Posterior vena cava (tissue), 2 donors: ENCODE measurements at regions of chr6 and their contacts with region 1.

Region 1: GRCh38 chr6:25070547-25071366 is 135.0 kb upstream of the RIPOR2 start:
- DNase-seq: peak; percentile 87

Region 2: DNA sequence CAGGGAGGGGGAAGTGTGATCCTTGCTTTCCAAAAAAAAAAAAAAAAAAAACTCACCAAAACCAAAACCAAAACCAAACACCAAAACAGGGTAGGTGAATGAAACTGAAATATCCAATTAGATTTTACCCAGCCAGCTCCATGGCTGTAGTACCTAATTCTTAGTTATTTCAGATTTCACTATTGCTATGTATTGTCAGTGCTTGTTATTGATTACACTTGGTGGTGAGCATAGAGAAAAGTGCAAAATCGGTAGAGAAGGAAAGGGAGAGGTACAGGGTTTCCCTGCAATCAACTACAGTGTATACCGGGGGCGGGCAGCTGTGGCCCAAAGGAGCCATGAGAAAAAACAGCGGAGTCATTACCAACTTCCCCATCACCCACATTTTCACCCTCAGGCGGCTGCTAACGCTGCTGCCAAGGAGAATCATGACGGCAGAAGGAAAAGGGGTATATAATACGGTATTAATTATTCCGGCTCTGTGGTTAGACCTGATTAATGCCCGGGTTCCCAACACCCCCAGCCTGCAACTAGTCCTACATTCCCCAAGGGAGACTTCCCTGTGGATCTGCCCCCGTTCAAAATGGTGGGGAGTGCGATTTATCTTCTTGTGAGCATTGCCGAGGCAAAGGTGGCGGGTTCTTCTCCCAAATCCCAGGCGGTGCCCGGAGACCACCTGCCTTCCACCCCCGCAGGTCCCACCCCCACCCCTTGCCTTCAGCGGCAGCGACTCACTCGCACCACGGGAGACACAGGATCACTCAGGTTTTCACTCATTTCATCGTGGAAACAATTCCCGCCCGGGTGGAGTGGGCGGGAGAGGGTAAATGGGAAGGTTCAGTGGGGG is 351.4 kb before region 1 on chr6 and contains the start of gene C6orf62:
- intact Hi-C with region 1: loop called in 1 of 2 experiments (anchors 10 kb)
- DNase-seq: peak; percentile 79
- total RNA-seq, gene C6orf62: 63.9 to 70.3 TPM

Region 3: DNA sequence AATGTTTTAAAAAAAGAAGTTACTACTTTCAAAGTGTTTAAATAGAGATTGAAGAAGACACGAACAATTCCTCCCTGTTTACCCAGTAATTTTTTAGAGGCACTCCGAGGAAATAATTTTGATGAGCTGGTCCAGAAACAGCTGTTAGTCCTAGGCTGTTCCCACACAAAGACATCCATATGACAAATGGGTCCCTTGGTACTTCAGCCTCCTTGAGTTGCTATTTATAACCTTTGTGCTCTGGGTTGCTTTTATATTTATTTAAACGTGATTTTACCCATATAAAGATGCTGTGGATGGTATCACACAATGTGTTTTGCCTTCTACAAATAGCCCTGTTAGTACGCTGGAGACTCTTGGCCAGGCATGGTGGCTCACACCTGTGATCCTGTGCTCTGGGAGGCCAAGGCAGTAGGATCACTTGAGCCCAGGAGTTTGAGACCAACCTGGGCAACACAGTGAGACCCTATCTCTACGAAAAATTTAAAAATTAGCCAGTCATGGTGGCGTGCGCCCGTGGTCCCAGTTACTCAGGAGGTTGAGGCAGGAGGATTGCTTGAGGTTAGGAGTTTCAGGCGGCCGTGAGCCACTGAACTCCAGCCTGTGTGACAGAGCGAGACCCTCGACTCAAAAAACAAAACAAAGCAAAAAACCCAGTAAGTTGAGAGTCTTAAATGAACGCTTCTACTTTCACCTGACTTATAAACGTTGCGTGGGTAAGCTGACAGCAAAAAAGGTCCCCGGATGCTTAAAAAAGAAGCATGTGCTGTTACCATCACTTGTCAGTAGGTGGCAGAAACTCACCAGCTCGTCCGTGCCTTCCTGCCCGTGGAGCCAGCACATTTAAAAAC is 215.1 kb before region 1 on chr6:
- intact Hi-C with region 1: loop called (anchors 5 kb)
- DNase-seq: no peak

Region 4: GRCh38 chr6:24980507-24981387 is 90.0 kb before region 1 on chr6:
- intact Hi-C with region 1: no loop called
- DNase-seq: no peak